ENCODE measurements at regions of chr1 and their contacts with region 1.

Region 1: DNA sequence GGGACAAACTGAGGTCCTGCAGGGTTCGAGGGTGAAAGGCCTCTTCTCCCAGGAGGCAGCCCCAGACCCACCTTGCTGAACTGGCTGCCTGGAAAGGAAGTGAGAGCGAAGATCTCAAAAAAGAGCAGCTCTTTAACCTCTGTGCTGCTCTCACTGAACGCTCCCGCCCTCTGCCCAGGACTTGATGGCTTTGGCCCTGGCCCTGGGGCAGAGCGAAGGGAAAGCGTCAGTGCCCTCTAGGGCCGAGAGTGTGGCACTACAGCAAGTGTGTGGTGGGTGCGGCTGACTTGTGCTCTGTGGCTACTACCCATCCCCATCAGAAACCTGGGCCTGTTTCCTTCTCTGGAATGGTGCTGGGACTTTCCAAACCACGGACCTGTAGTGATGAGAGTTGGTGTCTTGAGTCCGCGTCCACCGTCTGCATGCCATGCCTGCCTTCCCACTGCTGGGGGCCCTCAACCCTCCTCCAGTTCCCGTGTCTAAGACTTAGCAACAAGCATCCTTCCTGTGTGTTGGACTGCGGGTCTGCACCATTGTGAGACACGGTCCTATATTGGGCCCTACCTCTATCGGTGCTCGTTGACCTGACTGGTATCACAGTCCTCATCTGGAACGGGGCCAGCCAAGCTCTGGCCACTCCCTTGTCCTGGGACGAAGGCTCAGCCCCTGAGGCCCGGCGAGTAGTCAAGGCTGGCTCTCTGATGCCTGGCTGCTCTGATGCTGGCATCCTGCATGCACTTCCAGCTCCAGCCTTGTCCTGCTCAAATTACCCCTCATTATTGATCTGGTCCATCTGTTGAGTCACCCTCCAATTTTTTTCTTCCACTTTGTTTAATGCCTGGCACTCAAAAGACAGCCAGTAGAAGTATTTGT is 180.3 kb downstream of the DISC1 start:
- DNase-seq: peak; percentile 68
- ATAC-seq: peak; percentile 90
- H3K4me3 Mint-ChIP-seq: no peak overlapping the region
- H3K27ac Mint-ChIP-seq: no peak overlapping the region
- H3K4me1 Mint-ChIP-seq: no peaks in the 10 kb centered on the region
- H3K27me3 Mint-ChIP-seq: no peaks in the 10 kb centered on the region

Region 2: GRCh38 chr1:231272880-231273279 is 534.0 kb before region 1 on chr1:
- CTCF ChIA-PET with region 1: no interaction called
- POLR2A ChIA-PET with region 1: no interaction called
- intact Hi-C with region 1: no loop called
- DNase-seq: peak; percentile 31
- ATAC-seq: peak; percentile 51
- H3K4me3 Mint-ChIP-seq: peak overlapping the region; percentile 7
- H3K27ac Mint-ChIP-seq: peak overlapping the region; percentile 95
- H3K4me1 Mint-ChIP-seq: peaks cover 26% of the 10 kb centered on the region
- H3K27me3 Mint-ChIP-seq: no peaks in the 10 kb centered on the region

Region 3: DNA sequence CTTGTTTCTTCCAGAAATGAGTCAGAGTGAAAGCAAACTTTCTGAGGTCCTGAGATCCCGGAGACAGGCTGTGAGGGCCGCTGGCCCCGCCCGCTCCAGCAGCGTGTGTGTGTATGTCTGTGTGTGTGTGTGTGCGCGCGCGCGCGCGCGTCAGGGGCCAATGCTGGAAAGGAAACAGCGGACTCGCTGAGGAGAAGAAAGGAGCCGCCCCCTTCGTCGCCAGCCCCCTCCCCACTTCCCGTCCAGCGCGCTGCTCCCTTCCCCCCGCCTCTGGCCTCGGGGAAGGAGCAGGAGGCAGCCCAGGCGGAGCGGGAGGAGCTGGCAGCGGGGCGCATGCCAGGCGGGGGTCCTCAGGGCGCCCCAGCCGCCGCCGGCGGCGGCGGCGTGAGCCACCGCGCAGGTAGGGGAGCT is 180.3 kb before region 1 on chr1 and contains the start of gene DISC1:
- CTCF ChIA-PET with region 1: interaction called, 3 read pairs
- POLR2A ChIA-PET with region 1: no interaction called
- intact Hi-C with region 1: loop called in 1 of 2 experiments (anchors 10 kb)
- DNase-seq: peak; percentile 80
- ATAC-seq: peak; percentile 60
- H3K4me3 Mint-ChIP-seq: peak within 1 kb of the TSS; percentile 80
- H3K27ac Mint-ChIP-seq: peak within 1 kb of the TSS; percentile 71
- H3K4me1 Mint-ChIP-seq: peaks cover 32% of the 10 kb centered on the region
- H3K27me3 Mint-ChIP-seq: peaks cover 3% of the 10 kb centered on the region
- total RNA-seq, gene DISC1: 1.9 to 3.8 TPM

Region 4: DNA sequence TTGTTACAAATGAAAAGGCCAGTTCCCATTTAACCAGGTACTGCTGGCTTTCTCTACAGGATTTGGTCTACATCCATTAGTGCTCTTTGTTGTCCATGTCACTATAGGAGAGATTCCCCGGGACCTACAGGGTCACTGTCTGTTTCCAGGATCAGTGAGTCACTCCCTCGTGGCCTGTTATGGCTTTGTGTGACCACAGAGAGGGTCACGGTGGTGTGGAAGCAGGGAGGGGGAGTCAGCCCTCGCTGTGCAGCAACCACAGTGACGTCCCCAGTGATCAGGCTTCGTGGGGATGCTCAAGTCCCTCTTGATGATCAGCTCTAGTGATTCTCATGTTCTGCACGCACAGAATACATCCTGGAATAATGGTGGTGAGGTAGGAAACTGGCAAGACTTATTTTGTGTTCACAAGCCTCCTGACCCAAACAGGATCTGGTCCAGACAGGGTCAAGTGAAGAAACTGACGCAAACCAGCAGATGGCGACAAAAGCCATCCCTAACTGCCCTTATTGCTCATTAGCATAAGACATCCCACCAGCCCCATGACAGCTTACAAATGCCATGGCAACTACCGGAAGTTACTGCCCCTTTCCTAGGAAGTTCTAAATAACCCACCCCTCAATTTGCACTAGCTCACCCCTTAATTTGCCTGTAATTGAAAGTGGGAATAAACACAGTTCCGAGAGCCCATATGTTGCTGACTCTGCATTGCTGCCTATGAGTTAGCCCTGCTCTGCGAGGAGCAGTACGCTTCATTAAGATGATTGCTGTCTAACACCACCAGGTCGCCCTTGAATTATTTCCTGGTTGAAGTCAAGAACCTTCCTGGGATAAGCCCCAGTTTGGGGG is 81.8 kb before region 1 on chr1:
- CTCF ChIA-PET with region 1: no interaction called
- POLR2A ChIA-PET with region 1: no interaction called
- intact Hi-C with region 1: loop called in 1 of 2 experiments (anchors 1 kb)
- DNase-seq: peak; percentile 58
- ATAC-seq: peak; percentile 69
- H3K4me3 Mint-ChIP-seq: no peak overlapping the region
- H3K27ac Mint-ChIP-seq: no peak overlapping the region
- H3K4me1 Mint-ChIP-seq: no peaks in the 10 kb centered on the region
- H3K27me3 Mint-ChIP-seq: no peaks in the 10 kb centered on the region

Measured in activated CD4-positive, alpha-beta T cell treated with anti-CD3 and anti-CD28 coated beads for 36 hours (primary cell).